ENCODE measurements at regions of chr1 and their contacts with region 1.

Region 1: DNA sequence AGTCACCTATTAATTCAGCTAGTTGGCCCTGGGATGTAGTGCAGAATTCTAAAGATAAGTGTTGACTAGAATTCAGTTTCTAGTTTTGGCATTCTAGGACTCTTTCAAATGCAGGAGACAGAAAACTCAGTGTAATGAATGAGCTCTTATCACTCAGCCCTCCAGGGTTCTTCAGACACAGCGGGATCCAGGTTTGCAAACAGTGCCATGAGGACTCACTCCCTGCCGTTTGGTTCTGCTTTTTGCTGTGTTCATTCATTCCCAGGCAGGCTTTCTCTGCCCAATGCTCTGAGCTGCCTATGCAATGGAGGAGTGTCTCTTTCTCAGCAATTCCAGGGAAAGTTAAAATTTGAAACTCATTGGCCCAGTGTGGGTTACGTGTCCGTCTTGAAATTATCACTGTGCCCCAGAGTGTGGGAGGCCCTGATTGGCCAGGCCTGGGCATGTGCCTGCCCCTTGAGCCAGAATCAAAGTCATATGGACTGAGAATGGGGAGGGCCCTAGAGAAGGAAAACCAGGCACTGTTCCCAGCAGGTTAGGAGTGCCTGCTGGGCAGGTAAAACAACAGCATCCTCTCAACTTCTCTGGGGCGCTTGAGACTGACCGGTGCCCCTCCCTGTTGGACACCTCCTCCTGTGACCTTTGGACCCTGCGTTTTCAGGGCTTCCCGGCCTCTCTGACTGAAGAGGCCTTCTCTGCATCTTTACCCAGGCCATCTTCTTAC is 43.4 kb downstream of the TMEM51 start:
- DNase-seq: no peak
- ATAC-seq: peak in 1 of 8 donors; percentile 17
- H3K4me3 ChIP-seq: no peak overlapping the region
- H3K27ac ChIP-seq: no peak overlapping the region
- H3K4me1 ChIP-seq: peaks cover 0 to 15% (median 0%) of the 10 kb centered on the region in 9 donors
- H3K27me3 ChIP-seq: no peaks in the 10 kb centered on the region
- CTCF ChIP-seq: no peak

Region 2: DNA sequence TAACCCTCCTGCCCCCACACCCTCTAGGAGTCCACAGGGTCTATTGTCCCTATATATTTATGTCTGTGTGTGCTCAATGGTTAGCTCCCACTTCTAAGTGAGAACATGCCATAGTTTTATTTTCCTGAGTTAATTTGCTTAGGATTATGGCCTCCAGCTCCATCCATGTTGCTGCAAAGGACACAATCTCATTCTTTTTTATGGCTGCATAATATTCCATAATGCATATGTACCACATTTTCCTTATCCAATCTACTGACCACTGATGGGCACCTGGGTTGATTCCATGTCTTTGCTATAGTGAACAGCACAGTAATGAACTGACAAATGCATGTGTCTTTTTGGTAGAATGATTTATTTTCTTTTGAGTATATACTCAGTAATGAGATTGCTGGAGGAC is 36.7 kb after region 1 on chr1:
- intact Hi-C with region 1: loop called in 1 of 10 experiments (anchors 2 kb)
- DNase-seq: no peak
- ATAC-seq: no peak
- H3K4me3 ChIP-seq: no peak overlapping the region
- H3K27ac ChIP-seq: no peak overlapping the region
- H3K4me1 ChIP-seq: peaks cover 0 to 14% (median 0%) of the 10 kb centered on the region in 9 donors
- H3K27me3 ChIP-seq: peaks cover 0 to 6% (median 0%) of the 10 kb centered on the region in 7 donors
- CTCF ChIP-seq: no peak